ENCODE measurements at regions of chr2 and their contacts with region 1.

Region 1: GRCh38 chr2:67451086-67451832 is 54.1 kb downstream of the ETAA1 start:
- DNase-seq: no peak
- ATAC-seq: no peak
- H3K4me3 ChIP-seq: no peak overlapping the region
- H3K27ac ChIP-seq: no peak overlapping the region
- H3K4me1 ChIP-seq: peaks cover 0 to 13% (median 0%) of the 10 kb centered on the region in 9 donors
- H3K27me3 ChIP-seq: no peaks in the 10 kb centered on the region
- CTCF ChIP-seq: no peak

Region 2: DNA sequence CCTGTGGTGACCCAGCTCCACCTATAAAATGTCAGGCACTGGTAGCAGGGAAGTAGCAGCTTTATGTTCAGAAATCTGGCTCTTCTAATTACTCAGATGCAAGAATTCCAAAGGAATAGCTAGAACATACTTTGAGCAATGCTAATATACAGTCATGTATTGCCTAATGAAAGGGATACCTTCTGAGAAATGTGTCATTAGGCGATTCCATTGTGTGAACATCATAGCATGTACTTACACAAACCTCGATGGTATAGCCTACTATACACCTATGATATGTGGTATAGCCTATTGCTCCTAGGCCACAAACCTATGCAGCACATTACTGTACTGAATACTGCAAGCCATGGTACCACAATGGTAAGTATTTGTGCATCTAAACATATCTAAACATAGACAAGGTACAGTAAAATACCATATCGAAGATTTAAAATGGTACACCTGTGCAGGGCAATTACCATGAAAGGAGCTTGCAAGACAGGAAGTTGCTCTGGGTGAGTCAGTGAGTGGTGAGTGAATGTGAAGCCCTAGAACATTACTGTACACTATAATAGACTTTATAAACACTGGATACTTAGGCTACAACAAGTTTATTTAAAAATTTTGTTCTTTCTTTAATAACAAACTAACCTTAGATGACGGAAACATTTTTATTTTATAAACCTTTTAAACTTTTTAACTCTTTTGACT is 104.4 kb before region 1 on chr2:
- intact Hi-C with region 1: loop called in 1 of 10 experiments (anchors 10 kb)
- DNase-seq: no peak
- ATAC-seq: no peak
- H3K4me3 ChIP-seq: no peak overlapping the region
- H3K27ac ChIP-seq: no peak overlapping the region
- H3K4me1 ChIP-seq: no peaks in the 10 kb centered on the region
- H3K27me3 ChIP-seq: no peaks in the 10 kb centered on the region
- CTCF ChIP-seq: no peak

Region 3: GRCh38 chr2:67561457-67561965 is 110.3 kb after region 1 on chr2:
- intact Hi-C with region 1: loop called in 2 of 10 experiments (anchors 2 to 5 kb)
- DNase-seq: peak; percentile 51 to 77
- ATAC-seq: peak in 7 of 8 donors; percentile 39 to 97 (median 85)
- H3K4me3 ChIP-seq: no peak overlapping the region
- H3K27ac ChIP-seq: peak overlapping the region; percentile 40 to 82 (median 76)
- H3K4me1 ChIP-seq: peaks cover 0 to 24% (median 6%) of the 10 kb centered on the region in 9 donors
- H3K27me3 ChIP-seq: no peaks in the 10 kb centered on the region
- CTCF ChIP-seq: no peak

Measured in heart right ventricle (tissue), 16 donors.